Esophagus muscularis mucosa (tissue), 4 donors: ENCODE measurements at regions of chr16 and their contacts with region 1.

Region 1: DNA sequence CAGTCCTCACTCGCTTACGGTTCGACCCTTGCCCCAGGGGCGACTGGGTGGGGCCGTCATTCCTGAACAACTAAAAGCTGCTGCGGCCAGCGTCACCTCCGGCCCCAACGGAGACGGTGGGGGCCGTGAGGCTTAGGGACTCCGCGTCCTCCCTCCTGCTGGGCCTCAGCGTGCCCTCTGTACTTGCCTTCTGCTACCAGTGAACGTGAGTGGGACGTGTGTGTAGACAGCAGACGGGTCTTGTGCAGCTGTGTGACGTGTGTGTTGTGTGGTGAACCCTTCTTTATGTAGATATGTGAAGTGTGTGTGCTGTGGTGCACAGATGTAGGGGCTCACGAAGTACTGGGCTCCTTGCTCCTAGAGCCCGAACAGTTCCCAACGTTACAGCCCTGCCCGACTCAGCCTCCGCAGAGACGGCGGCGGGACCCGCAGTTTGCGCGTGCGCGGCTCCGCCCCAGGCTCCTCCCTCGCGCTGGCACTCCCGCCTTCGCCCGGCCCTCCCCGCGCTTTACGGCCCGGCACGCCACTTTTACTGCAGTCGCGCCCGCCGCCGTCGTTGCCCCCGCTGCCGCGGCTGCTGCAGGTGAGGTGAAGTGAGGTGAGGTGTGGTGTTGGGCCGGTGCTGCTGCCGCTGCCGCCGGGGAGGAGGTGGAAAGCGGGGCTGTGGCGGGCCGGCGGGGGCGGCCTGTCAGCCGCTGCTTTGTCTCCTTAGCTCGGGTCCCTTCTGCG is at the start of gene PHAF1:
- DNase-seq: peak; percentile 97
- H3K4me3 ChIP-seq: peak within 1 kb of the TSS; percentile 91 to 96 (median 92)
- H3K27ac ChIP-seq: peak within 1 kb of the TSS; percentile 75 to 86 (median 77)
- H3K4me1 ChIP-seq: peaks cover 13 to 40% (median 31%) of the 10 kb centered on the region in 4 donors
- H3K27me3 ChIP-seq: no peaks in the 10 kb centered on the region
- CTCF ChIP-seq: peak in 1 of 3 experiments; percentile 30
- EP300 ChIP-seq: no peak
- POLR2A ChIP-seq: no peak
- total RNA-seq, gene PHAF1: 11.4 to 23.7 (median 17.1) TPM

Region 2: GRCh38 chr16:67028555-67029248 is 80.9 kb before region 1 on chr16 and contains the start of gene CBFB:
- intact Hi-C with region 1: loop called (anchors 5 kb)
- DNase-seq: peak; percentile 96
- H3K4me3 ChIP-seq: peak within 1 kb of the TSS; percentile 93 to 100 (median 99)
- H3K27ac ChIP-seq: peak within 1 kb of the TSS; percentile 97 to 99 (median 99)
- H3K4me1 ChIP-seq: peaks cover 26 to 43% (median 36%) of the 10 kb centered on the region in 4 donors
- H3K27me3 ChIP-seq: no peaks in the 10 kb centered on the region
- CTCF ChIP-seq: no peak
- EP300 ChIP-seq: no peak
- POLR2A ChIP-seq: peak; percentile 86
- total RNA-seq, gene CBFB: 20.6 to 39.8 (median 30.6) TPM

Region 3: DNA sequence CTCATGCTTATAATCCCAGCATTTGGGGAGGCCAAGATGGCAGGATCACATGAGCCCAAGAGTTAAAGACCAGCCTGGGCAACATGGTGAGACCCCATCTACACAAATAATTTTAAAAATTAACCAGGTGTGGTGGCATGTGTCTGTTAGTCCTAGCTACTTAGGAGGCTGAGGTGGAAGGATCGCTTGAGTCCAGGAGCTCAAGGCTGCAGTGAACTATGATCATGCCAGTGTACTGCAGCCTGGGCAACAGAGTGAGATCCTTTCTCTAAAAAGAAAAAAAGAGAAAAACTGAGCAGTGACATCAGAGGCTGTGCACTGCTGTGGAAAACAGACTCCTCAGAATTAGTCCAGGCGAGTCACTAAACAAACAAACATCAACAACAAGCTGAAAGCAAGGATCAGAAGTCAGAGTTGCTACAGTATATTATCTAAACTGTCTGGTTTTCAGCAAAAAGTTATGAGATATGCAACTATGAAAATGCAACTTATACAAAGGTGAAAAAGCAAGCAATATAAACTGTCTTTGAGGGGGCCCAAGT is 41.3 kb before region 1 on chr16:
- intact Hi-C with region 1: no loop called
- DNase-seq: no peak
- H3K4me3 ChIP-seq: no peak overlapping the region
- H3K27ac ChIP-seq: no peak overlapping the region
- H3K4me1 ChIP-seq: no peaks in the 10 kb centered on the region
- H3K27me3 ChIP-seq: no peaks in the 10 kb centered on the region
- CTCF ChIP-seq: no peak
- EP300 ChIP-seq: no peak
- POLR2A ChIP-seq: no peak